ENCODE measurements at regions of chr10 and their contacts with region 1.

Region 1: GRCh38 chr10:70233109-70233938 is at the start of gene PPA1:
- DNase-seq: peak; percentile 97 to 100 (median 99)
- ATAC-seq: peak; percentile 91
- H3K4me3 ChIP-seq: peak within 1 kb of the TSS; percentile 95
- H3K4me3 Mint-ChIP-seq: peak within 1 kb of the TSS; percentile 94
- H3K27ac ChIP-seq: peak within 1 kb of the TSS; percentile 69 to 74
- H3K27ac Mint-ChIP-seq: peak within 1 kb of the TSS; percentile 92
- H3K4me1 ChIP-seq: peaks cover 20% of the 10 kb centered on the region
- H3K4me1 Mint-ChIP-seq: peaks cover 26% of the 10 kb centered on the region
- H3K27me3 ChIP-seq: no peaks in the 10 kb centered on the region
- H3K27me3 Mint-ChIP-seq: no peaks in the 10 kb centered on the region
- CTCF ChIP-seq: peak; percentile 14
- total RNA-seq, gene PPA1: 69.0 to 69.3 TPM

Region 2: DNA sequence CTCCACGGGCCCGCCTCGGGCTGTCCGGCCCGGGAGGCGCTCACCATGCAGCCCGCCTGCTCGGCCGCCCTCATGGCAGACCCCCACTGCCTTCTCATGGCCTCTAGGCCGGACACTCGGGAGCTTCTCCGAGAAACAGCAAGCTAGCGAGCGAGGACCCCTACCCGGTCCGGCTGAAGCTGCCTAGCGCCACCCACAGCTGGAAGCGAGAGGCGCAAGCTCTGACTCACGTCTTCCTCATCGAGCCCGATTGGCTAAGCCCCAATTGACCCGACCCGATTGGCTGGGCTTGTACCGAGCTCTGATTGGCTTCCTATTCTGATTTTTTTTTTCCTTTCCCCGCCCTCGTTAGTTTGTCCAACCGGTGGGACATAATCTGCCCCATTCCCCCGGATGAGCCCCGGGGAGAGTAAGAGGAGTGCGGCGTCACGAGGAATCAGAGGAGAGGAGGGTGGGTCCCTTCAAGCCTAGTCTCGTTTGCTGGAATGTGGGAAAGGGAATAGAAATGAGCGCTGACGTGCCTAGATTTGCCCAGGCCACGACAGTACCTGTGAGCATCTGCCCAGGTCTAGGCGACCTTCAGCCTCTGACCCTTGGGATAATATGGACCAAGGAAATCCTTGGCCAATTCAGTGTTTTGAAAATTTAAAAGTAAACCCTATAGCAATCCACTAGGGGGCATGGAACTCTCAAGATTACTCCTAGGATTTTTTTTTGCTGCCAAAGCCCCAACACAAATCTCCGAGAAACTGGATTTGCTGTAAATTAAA is 86.7 kb before region 1 on chr10 and contains the start of gene TYSND1:
- CTCF ChIA-PET with region 1: interaction called, 11 read pairs
- POLR2A ChIA-PET with region 1: interaction called, 17 read pairs
- intact Hi-C with region 1: loop called (anchors 2 to 5 kb)
- DNase-seq: peak; percentile 84 to 97 (median 90)
- ATAC-seq: peak; percentile 82
- H3K4me3 ChIP-seq: peak within 1 kb of the TSS; percentile 82
- H3K4me3 Mint-ChIP-seq: peak within 1 kb of the TSS; percentile 92
- H3K27ac ChIP-seq: peak within 1 kb of the TSS; percentile 76 to 87
- H3K27ac Mint-ChIP-seq: peak within 1 kb of the TSS; percentile 91
- H3K4me1 ChIP-seq: peaks cover 32% of the 10 kb centered on the region
- H3K4me1 Mint-ChIP-seq: peaks cover 45% of the 10 kb centered on the region
- H3K27me3 ChIP-seq: no peaks in the 10 kb centered on the region
- H3K27me3 Mint-ChIP-seq: no peaks in the 10 kb centered on the region
- CTCF ChIP-seq: peak; percentile 78
- total RNA-seq, gene TYSND1: 12.6 to 13.0 TPM

Region 3: GRCh38 chr10:70191972-70192305 is 41.4 kb before region 1 on chr10:
- CTCF ChIA-PET with region 1: no interaction called
- POLR2A ChIA-PET with region 1: no interaction called
- intact Hi-C with region 1: no loop called
- DNase-seq: no peak
- ATAC-seq: no peak
- H3K4me3 ChIP-seq: no peak overlapping the region
- H3K4me3 Mint-ChIP-seq: no peak overlapping the region
- H3K27ac ChIP-seq: no peak overlapping the region
- H3K27ac Mint-ChIP-seq: no peak overlapping the region
- H3K4me1 ChIP-seq: no peaks in the 10 kb centered on the region
- H3K4me1 Mint-ChIP-seq: peaks cover under 1% of the 10 kb centered on the region
- H3K27me3 ChIP-seq: no peaks in the 10 kb centered on the region
- H3K27me3 Mint-ChIP-seq: no peaks in the 10 kb centered on the region
- CTCF ChIP-seq: no peak

Region 4: DNA sequence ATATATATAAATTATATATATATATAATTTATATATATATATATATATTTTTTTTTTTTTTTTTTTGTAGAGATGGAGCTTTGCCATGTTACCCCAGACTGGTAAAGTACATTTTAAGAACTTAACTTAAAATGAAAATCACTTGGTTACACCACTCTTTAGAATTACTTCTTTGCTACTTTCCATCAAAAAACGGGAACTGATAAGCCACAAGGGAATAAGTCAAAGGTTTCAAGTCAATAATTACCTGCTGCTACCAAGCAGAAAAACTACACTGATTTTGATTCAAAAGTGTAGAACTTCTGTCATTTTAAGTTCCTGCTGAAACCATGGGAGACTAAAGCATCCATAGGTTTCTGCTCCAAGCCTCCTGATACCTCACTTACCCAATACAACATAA is 12.3 kb before region 1 on chr10:
- CTCF ChIA-PET with region 1: interaction called, 26 read pairs
- POLR2A ChIA-PET with region 1: interaction called, 13 read pairs
- intact Hi-C with region 1: loop called in 1 of 2 experiments (anchors 1 kb)
- DNase-seq: peak in 1 of 14 experiments; percentile 8
- ATAC-seq: no peak
- H3K4me3 ChIP-seq: no peak overlapping the region
- H3K4me3 Mint-ChIP-seq: no peak overlapping the region
- H3K27ac ChIP-seq: no peak overlapping the region
- H3K27ac Mint-ChIP-seq: peak overlapping the region; percentile 21
- H3K4me1 ChIP-seq: peaks cover 3% of the 10 kb centered on the region
- H3K4me1 Mint-ChIP-seq: peaks cover 17% of the 10 kb centered on the region
- H3K27me3 ChIP-seq: no peaks in the 10 kb centered on the region
- H3K27me3 Mint-ChIP-seq: no peaks in the 10 kb centered on the region
- CTCF ChIP-seq: no peak

Region 5: GRCh38 chr10:70363971-70364771 is 130.8 kb after region 1 on chr10:
- CTCF ChIA-PET with region 1: interaction called, 11 read pairs
- POLR2A ChIA-PET with region 1: interaction called, 9 read pairs
- intact Hi-C with region 1: no loop called
- DNase-seq: peak; percentile 72 to 91 (median 78)
- ATAC-seq: peak; percentile 98
- H3K4me3 ChIP-seq: no peak overlapping the region
- H3K4me3 Mint-ChIP-seq: no peak overlapping the region
- H3K27ac ChIP-seq: no peak overlapping the region
- H3K27ac Mint-ChIP-seq: no peak overlapping the region
- H3K4me1 ChIP-seq: peaks cover 13% of the 10 kb centered on the region
- H3K4me1 Mint-ChIP-seq: peaks cover 9% of the 10 kb centered on the region
- H3K27me3 ChIP-seq: no peaks in the 10 kb centered on the region
- H3K27me3 Mint-ChIP-seq: no peaks in the 10 kb centered on the region
- CTCF ChIP-seq: peak; percentile 89

Region 6: DNA sequence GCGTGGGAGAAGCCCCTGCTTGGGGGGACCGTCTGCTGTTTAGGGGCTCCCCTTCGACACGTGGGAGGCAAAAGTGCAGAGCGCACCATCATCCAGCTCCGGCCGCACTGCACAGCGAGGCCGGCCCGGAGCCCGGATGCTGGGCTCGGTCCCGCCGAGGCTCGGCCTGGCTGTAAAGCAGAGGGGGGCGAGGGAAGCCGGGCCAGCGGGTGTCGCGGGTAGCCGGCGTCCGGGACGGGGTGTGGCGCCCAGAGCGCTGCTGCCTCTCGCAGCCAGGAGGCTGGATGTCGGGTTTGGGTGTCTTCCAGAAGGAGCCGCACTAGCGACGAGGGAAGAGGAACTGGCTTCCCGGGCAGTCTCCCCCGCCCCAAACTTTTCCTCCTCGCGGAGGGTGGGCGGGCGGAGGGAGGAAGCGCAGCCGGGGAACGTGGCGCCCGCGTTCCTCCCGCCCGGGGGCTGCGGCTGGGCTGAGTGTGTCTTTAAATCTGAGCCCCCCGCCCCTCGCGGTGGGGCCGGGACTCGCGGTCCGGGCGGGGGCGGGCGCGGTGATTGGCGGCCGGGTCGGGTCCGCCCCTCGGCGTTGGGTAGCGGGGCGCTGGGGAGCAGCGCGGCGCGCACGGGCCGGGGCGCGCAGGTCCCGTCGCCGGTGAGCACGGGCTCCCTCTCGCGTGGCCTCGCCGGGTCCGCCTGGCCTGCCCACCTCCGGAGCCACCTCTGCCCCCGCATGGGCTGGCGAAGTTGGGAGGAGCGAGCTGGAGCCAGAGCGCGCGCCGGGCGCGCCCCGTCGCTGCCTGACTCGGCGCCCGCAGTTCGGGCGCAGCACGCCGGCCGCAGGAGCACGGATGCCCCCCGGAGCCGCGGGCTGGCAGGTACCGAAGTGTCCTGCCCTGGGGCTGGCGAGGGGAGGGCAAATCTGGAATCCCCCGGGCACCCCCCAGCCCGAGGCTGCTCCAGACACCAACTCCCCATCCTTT is 245.2 kb after region 1 on chr10 and contains the start of gene PALD1:
- CTCF ChIA-PET with region 1: no interaction called
- POLR2A ChIA-PET with region 1: no interaction called
- intact Hi-C with region 1: loop called in 1 of 2 experiments (anchors 5 kb)
- DNase-seq: peak in 6 of 14 experiments; percentile 3 to 62 (median 36)
- ATAC-seq: peak; percentile 8
- H3K4me3 ChIP-seq: peak within 1 kb of the TSS; percentile 49
- H3K4me3 Mint-ChIP-seq: peak within 1 kb of the TSS; percentile 84
- H3K27ac ChIP-seq: no peak within 1 kb of the TSS
- H3K27ac Mint-ChIP-seq: peak within 1 kb of the TSS; percentile 58
- H3K4me1 ChIP-seq: peaks cover 50% of the 10 kb centered on the region
- H3K4me1 Mint-ChIP-seq: peaks cover 64% of the 10 kb centered on the region
- H3K27me3 ChIP-seq: no peaks in the 10 kb centered on the region
- H3K27me3 Mint-ChIP-seq: no peaks in the 10 kb centered on the region
- CTCF ChIP-seq: no peak
- total RNA-seq, gene PALD1: 0.36 to 0.44 TPM

Region 7: DNA sequence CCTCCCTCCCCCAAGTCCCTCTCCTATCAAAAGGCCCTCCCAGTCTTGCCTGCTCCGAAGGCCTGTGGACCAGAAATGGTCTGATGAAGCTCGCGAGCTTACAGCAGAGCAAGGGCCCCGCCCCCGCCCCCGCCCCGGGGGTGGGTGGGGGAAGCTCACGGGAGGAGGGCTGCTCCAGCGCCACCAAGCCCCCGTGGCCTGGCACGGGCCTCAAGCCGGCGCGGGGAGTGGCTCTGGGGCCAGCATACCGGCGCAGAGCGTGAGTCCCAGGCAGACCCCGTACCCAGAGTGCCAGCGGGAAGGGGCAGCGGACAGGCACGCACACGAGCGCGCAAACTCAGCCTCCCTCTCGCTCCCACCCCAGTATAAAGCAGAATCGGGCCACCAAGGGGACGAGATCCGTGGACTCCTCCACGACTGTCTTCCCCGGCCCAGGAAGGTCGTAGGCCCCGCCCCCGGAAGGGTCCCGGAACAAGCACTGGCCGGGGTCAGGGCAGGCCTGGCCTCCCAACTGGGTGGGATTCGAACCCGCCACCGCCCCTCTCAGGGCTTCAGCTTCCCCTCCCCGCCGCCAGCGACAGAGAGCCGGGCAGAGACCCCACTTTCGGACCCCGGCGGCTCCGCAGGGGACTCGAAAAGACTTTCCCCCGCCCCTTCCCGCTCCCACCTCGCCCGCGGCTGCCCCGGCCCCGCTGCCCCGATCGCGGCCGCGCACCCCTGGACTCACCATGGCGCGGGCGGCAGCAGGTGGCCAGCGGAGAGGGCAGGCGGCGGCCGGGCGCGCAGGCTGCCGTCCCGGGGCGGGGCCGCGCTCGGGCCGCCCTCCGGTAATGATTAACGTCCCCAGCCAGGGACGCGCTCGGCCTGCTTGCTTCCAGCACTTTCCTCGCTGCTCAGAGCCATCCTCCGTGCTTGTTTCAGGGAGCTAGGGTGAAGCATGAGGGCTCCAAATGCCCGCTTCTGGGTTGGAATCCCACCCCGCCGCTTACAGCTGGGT is 654.8 kb after region 1 on chr10 and contains the start of gene PCBD1:
- CTCF ChIA-PET with region 1: no interaction called
- POLR2A ChIA-PET with region 1: no interaction called
- intact Hi-C with region 1: loop called in 1 of 2 experiments (anchors 5 kb)
- DNase-seq: peak; percentile 43 to 84 (median 65)
- ATAC-seq: peak; percentile 92
- H3K4me3 ChIP-seq: peak within 1 kb of the TSS; percentile 96
- H3K4me3 Mint-ChIP-seq: peak within 1 kb of the TSS; percentile 89
- H3K27ac ChIP-seq: peak within 1 kb of the TSS; percentile 49 to 87
- H3K27ac Mint-ChIP-seq: peak within 1 kb of the TSS; percentile 77
- H3K4me1 ChIP-seq: peaks cover 14% of the 10 kb centered on the region
- H3K4me1 Mint-ChIP-seq: peaks cover 11% of the 10 kb centered on the region
- H3K27me3 ChIP-seq: no peaks in the 10 kb centered on the region
- H3K27me3 Mint-ChIP-seq: no peaks in the 10 kb centered on the region
- CTCF ChIP-seq: no peak
- total RNA-seq, gene PCBD1: 4.7 to 4.8 TPM

Region 8: DNA sequence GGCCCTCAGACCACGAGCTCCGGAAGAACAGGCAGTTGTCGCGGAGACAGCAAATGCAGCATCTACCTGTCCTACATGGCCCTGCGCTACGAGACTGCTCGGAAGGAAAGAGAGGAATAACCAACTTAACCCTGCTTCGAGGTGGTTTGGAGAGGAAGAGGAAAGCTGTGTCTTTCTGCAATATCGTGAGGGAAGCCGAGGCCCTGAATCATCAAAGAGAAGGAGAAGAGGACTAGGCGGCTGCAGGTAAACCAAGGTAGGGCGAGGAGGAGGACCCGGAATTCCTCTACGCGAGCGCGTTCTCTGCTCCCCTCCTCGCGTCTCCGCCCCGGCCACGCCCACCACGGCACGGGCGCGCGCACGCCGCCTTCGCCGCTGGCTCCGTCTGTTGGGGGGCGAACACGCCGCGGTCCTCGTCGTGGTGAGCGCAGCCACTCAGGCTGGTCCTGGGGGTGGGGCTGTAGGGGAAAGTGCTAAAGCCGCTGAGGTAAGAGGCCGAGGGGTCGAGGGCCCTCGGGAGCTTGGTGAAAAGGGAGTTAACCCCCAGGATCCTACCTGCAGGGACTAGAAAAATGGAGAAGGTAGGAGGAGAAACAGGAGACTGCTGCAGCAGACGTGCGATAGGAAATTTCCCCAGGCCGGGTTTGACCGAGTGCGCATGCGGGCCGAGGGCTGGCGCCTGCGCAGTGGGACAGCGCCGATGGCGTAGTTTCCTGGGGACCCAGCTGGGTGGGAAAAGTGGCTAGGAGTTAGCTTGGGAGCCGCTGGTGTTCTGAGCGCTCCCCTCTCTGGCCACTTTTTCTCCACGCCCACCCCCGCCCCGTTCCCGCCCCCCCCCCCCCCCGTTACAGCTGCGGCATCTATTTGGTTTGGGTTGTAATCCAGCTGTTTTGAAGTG is 1982.6 kb after region 1 on chr10 and contains the starts of genes ANAPC16 and ASCC1:
- CTCF ChIA-PET with region 1: no interaction called
- POLR2A ChIA-PET with region 1: no interaction called
- intact Hi-C with region 1: loop called in 1 of 2 experiments (anchors 10 kb)
- DNase-seq: peak; percentile 86 to 97 (median 94)
- ATAC-seq: peak; percentile 79
- H3K4me3 ChIP-seq: peak within 1 kb of the TSS; percentile 83
- H3K4me3 Mint-ChIP-seq: peak within 1 kb of the TSS; percentile 97
- H3K27ac ChIP-seq: peak within 1 kb of the TSS; percentile 89 to 98
- H3K27ac Mint-ChIP-seq: peak within 1 kb of the TSS; percentile 94
- H3K4me1 ChIP-seq: peaks cover 62% of the 10 kb centered on the region
- H3K4me1 Mint-ChIP-seq: peaks cover 50% of the 10 kb centered on the region
- H3K27me3 ChIP-seq: no peaks in the 10 kb centered on the region
- H3K27me3 Mint-ChIP-seq: no peaks in the 10 kb centered on the region
- CTCF ChIP-seq: no peak
- total RNA-seq, gene ANAPC16: 61.9 to 64.3 TPM
- total RNA-seq, gene ASCC1: 16.5 to 19.0 TPM

Measured in CD4-positive, alpha-beta T cell (primary cell).